ENCODE measurements at regions of chr18 and their contacts with region 1.

Region 1: GRCh38 chr18:35174093-35174731 is 66.6 kb upstream of the ZNF397 start:
- DNase-seq: no peak
- H3K4me3 Mint-ChIP-seq: no peak overlapping the region
- H3K27ac Mint-ChIP-seq: no peak overlapping the region
- H3K4me1 Mint-ChIP-seq: peaks cover 15% of the 10 kb centered on the region
- H3K27me3 Mint-ChIP-seq: no peaks in the 10 kb centered on the region

Region 2: DNA sequence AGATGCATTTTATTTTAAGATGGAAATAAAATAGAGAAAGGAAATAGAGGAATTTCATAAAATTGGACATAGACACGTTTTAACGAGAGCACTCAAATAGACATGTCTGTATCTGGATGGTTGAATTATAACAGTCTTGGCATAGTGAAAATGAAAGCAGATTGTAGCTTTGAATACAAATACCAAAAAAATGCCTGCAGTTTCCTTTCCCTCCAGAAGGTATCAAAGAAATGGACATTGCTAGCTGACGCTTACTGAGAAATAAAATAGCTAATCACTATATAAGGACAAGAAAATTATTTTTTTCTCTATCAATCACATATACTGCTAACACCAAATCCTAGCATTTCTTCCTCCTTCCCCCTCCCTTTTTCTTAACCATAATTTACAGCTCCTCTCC is 144.4 kb before region 1 on chr18:
- intact Hi-C with region 1: loop called (anchors 5 kb)
- DNase-seq: no peak
- H3K4me3 Mint-ChIP-seq: peak overlapping the region; percentile 80
- H3K27ac Mint-ChIP-seq: peak overlapping the region; percentile 98
- H3K4me1 Mint-ChIP-seq: peaks cover 54% of the 10 kb centered on the region
- H3K27me3 Mint-ChIP-seq: no peaks in the 10 kb centered on the region

Measured in activated T-helper 2 cell treated with anti-CD3 and anti-CD28 coated beads, Interferon-gamma antibody, Interleukin-2, Interleukin-4, amounts not matched to agents 10 μg/mL and 5 μg/mL and 100 μg/mL, durations not matched to agents 14 hours and 24 hours and 36 hours (primary cell).